Transverse colon (tissue), 4 donors: ENCODE measurements at regions of chr6 and their contacts with region 1.

Region 1: DNA sequence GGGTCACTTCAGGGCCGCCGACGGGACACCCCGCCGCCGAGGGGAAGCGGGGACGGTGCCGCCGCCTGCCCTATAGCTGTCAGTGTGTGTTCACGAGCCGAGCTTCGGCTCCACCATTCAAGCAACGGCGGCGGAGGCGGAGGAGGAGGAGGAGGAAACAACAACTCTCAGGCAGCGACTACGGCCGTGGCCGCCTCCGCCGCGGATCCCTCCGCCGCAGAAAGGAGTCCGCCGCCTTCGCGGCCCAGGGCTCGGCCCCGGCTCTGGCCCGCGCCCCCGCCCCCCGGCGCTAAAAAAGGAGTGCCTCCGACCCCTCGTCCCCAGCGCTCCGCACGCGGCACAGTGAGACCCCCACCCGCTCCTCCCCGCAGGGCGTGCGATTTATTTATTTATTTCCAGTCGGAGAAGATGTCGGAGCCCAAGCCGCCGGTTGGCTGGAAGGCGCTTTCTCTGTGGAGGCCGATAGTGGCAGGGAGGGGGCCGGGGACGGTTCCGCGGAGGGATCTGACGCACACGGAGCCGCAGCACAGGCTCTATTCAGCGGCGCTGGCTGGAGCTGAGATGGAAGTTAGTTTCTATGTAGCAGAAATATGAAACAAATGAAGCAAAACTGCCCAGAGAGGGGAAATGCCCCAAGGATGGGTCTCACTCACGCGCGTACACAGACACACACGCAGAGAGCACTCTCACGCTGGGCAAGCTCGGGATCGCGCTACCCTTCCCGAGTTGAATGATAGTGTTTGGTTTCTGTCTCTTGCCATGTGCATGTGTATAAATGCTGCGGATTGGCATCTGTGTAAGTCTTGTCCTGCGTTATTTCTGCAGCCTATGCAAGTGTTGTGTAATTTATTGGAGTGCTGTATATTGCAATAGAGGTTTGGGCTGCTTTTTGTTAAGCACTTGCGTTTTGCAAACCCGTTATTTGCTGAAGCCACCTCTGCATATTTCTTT is at the start of gene PHIP:
- DNase-seq: peak; percentile 93
- H3K4me3 ChIP-seq: peak within 1 kb of the TSS; percentile 83 to 97 (median 92)
- H3K27ac ChIP-seq: peak within 1 kb of the TSS; percentile 97 to 99 (median 98)
- H3K4me1 ChIP-seq: peaks cover 12 to 40% (median 32%) of the 10 kb centered on the region in 4 donors
- H3K27me3 ChIP-seq: no peaks in the 10 kb centered on the region
- CTCF ChIP-seq: peak in 1 of 5 experiments; percentile 25
- EP300 ChIP-seq: peak; percentile 6
- POLR2A ChIP-seq: peak; percentile 77
- total RNA-seq, gene PHIP: 12.1 to 34.5 (median 20.7) TPM

Region 2: GRCh38 chr6:79040083-79040482 is 38.3 kb before region 1 on chr6:
- in situ Hi-C with region 1: no loop called
- intact Hi-C with region 1: no loop called
- DNase-seq: no peak
- H3K4me3 ChIP-seq: no peak overlapping the region
- H3K27ac ChIP-seq: no peak overlapping the region
- H3K4me1 ChIP-seq: no peaks in the 10 kb centered on the region
- H3K27me3 ChIP-seq: no peaks in the 10 kb centered on the region
- CTCF ChIP-seq: no peak
- EP300 ChIP-seq: no peak
- POLR2A ChIP-seq: no peak

Region 3: DNA sequence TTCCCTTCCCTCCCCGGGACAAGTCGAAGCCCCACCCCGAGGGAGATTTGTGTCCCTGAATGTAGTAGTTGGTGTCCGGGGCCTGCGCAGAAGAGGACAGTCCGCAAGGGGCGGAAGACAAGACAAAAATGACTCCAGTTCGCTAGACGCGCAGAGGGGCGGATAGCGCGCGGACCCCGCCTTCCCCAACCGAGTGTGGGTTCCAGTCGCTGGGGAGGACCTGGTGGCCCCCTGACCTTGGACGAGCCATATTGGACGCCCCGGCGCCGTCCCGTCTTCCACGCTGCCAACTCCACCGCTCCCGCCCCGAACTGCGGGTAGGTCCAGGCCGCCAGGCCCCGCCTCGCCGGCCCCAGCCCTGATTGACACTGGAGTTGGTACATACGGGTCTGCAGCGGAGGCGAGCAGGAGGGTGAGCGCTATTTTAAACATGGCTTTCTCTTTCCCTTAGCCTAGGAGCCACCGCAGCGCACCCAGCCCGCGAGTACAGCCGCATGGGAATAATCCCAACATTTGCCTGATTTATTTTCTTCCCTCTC is 155.3 kb after region 1 on chr6:
- in situ Hi-C with region 1: no loop called
- intact Hi-C with region 1: loop called (anchors 5 kb)
- DNase-seq: peak; percentile 88
- H3K4me3 ChIP-seq: peak overlapping the region; percentile 62 to 94 (median 84)
- H3K27ac ChIP-seq: peak overlapping the region; percentile 92 to 97 (median 94)
- H3K4me1 ChIP-seq: peaks cover 0 to 13% (median 5%) of the 10 kb centered on the region in 4 donors
- H3K27me3 ChIP-seq: no peaks in the 10 kb centered on the region
- CTCF ChIP-seq: peak; percentile 29 to 71 (median 38)
- EP300 ChIP-seq: no peak
- POLR2A ChIP-seq: peak; percentile 69

Region 4: DNA sequence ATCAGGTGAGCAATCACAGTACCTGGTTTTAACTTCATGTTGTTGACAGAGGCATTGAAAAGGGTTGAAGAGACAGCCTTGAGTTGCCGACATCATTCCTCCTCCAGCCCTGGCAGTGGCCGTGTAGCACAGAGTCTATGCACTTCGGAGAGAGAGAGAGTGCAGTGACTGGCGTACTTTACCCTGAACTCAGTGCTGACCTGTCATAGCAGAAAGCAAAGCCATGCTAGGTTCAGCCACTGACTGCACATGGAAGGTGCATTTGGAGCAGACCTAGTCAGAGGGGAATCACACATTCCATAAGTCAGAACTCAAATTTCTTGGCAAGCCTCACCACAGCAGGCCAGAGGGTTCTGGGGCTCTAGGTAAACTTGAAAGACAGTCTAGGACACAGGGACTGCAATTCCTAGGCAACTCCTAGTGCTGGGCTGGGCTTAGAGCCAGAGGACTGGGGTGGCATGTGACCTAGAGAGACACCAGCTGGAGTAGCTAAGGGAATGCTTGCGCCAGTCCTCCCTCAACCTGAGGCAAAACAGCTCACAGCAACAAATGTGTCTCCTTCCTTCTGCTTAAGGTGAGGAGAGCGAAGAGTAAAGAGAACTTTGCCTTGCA is 799.9 kb after region 1 on chr6:
- in situ Hi-C with region 1: no loop called
- intact Hi-C with region 1: loop called (anchors 5 kb)
- DNase-seq: no peak
- H3K4me3 ChIP-seq: no peak overlapping the region
- H3K27ac ChIP-seq: no peak overlapping the region
- H3K4me1 ChIP-seq: no peaks in the 10 kb centered on the region
- H3K27me3 ChIP-seq: no peaks in the 10 kb centered on the region
- CTCF ChIP-seq: no peak
- EP300 ChIP-seq: no peak
- POLR2A ChIP-seq: no peak